ENCODE measurements at regions of chr22 and their contacts with region 1.

Region 1: DNA sequence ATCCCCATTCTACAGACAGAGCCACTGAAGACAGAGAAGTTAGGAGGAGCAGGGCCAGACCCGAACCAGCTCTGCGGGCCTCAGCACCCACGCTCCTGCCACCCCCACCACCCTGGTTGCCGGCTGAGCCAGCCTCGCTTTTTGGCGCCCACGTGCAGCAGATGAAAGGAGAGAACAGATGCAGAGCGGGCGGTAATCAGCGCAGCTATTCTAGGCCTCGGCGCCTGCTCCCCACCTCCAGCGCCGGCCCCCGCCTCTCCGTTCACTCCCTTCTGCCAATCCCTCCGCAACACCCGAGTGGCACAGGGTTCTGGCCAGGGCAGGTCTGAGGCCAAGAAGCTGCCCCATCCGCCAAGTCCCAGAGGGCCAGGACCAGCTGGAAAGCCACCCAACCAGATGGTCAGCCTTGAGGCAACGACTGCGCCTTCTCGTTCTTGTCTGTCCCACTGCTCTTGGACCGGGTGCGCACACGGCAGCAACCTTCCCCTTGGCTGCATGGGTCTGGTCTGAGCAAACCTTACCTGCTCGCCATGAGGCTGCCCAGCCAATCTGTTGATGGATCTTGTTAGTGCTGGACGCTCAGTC is 16.8 kb downstream of the DNAL4 start:
- DNase-seq: no peak
- H3K4me3 ChIP-seq: no peak overlapping the region
- H3K27ac ChIP-seq: no peak overlapping the region
- H3K4me1 ChIP-seq: no peaks in the 10 kb centered on the region
- H3K27me3 ChIP-seq: no peaks in the 10 kb centered on the region
- CTCF ChIP-seq: no peak
- EP300 ChIP-seq: no peak
- POLR2A ChIP-seq: no peak

Region 2: DNA sequence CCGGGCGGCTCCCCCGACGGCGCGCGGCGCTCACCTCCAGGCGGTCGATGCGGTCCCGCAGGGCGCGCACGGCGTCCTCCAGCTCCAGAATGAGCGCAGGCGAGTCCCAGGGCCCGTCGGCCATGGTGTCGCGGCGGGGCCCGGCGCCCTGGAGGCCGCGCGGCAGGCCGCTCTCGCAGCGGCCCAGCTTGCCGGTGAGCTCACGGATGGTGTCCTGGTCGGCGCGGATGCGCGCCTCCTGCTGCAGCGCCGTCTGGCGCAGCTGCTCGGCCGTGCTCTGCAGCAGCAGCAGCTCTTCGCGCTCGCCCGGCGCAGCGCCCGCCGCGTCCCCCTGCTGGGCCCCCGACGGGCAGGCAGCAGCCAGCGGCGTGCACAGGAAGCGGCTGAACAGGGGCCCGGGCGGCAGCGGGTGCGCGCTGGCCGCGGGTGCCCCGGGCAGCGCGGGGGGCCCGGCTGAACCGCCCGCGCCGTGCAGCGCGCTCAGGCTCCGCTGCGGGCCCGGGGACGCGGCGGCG is 66.1 kb after region 1 on chr22:
- intact Hi-C with region 1: loop called in 3 of 4 experiments (anchors 5 to 10 kb)
- DNase-seq: peak; percentile 56 to 83 (median 68)
- H3K4me3 ChIP-seq: peak overlapping the region; percentile 36
- H3K27ac ChIP-seq: peak overlapping the region; percentile 21 to 64
- H3K4me1 ChIP-seq: no peaks in the 10 kb centered on the region
- H3K27me3 ChIP-seq: no peaks in the 10 kb centered on the region
- CTCF ChIP-seq: peak in 2 of 3 donors; percentile 48 to 77
- EP300 ChIP-seq: no peak
- POLR2A ChIP-seq: no peak

Region 3: GRCh38 chr22:38862375-38863329 is 85.5 kb after region 1 on chr22:
- intact Hi-C with region 1: loop called in 1 of 4 experiments (anchors 5 kb)
- DNase-seq: peak; percentile 79 to 90 (median 87)
- H3K4me3 ChIP-seq: no peak overlapping the region
- H3K27ac ChIP-seq: peak overlapping the region in 1 of 2 donors; percentile 62
- H3K4me1 ChIP-seq: peaks cover 27% of the 10 kb centered on the region
- H3K27me3 ChIP-seq: no peaks in the 10 kb centered on the region
- CTCF ChIP-seq: no peak
- EP300 ChIP-seq: no peak
- POLR2A ChIP-seq: no peak

Region 4: GRCh38 chr22:38996105-38996504 is 218.9 kb after region 1 on chr22:
- intact Hi-C with region 1: loop called in 2 of 4 experiments (anchors 5 to 10 kb)
- DNase-seq: no peak
- H3K4me3 ChIP-seq: no peak overlapping the region
- H3K27ac ChIP-seq: no peak overlapping the region
- H3K4me1 ChIP-seq: peaks cover 2% of the 10 kb centered on the region
- H3K27me3 ChIP-seq: no peaks in the 10 kb centered on the region
- CTCF ChIP-seq: no peak
- EP300 ChIP-seq: no peak
- POLR2A ChIP-seq: no peak

Region 5: DNA sequence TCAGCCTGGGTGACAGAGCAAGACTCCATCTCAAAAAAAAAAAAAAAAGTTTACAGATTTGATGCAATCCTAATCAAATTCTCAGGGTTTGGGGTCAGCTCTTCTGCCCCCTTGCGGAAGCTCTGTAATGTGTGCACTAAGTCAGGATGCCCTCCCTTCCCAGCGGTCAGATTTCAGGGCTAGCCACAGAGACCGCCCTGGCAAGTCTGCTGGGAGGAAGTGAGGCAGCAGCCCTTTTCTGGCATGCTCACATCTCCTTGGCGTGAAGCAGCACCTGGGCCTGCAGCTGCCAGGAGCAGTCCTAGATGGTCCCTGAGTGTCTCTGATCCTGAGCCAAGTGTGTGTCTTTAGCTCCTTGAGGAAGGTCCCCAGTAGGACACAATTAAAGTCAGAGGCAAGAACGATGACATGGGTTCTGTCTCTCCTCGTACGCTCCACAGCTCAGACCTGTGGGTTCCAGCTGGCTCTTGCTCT is 226.0 kb after region 1 on chr22:
- intact Hi-C with region 1: loop called in 2 of 4 experiments (anchors 5 to 10 kb)
- DNase-seq: peak; percentile 75 to 81 (median 78)
- H3K4me3 ChIP-seq: no peak overlapping the region
- H3K27ac ChIP-seq: no peak overlapping the region
- H3K4me1 ChIP-seq: no peaks in the 10 kb centered on the region
- H3K27me3 ChIP-seq: no peaks in the 10 kb centered on the region
- CTCF ChIP-seq: peak; percentile 58 to 79 (median 62)
- EP300 ChIP-seq: no peak
- POLR2A ChIP-seq: no peak

Region 6: DNA sequence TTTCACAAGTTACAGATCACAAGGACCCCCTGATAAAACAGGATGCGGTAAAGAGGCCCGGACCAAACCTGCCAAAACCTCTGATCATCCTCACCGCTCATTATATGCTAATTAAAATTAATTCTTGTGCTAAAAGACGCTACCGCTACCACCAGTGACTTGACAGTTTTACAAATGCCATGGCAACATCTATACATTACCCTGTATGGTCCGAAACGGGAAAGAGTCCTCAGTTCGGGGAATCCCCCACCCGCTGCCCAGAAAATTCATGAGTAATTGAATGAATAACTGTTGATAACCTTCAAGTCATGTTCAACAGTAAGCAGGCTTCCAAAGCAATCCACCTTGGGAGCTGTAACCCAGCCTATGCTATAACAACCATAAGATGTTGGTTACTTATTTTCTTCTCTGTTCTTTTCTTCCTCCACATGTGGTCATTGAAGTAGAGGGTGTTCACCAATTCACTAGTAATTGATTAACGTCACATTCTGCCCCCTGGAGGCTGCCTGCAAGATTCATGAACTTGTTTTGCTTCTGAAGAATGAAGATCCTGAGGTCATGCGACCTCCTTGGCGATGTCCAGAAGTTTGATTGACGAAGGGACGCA is 340.5 kb after region 1 on chr22:
- intact Hi-C with region 1: loop called in 2 of 4 experiments (anchors 10 kb)
- DNase-seq: peak in 1 of 5 donors; percentile 48
- H3K4me3 ChIP-seq: no peak overlapping the region
- H3K27ac ChIP-seq: no peak overlapping the region
- H3K4me1 ChIP-seq: no peaks in the 10 kb centered on the region
- H3K27me3 ChIP-seq: no peaks in the 10 kb centered on the region
- CTCF ChIP-seq: peak in 1 of 3 donors; percentile 15
- EP300 ChIP-seq: no peak
- POLR2A ChIP-seq: no peak

Measured in ovary (tissue), 10 donors.